Left ventricle myocardium superior (tissue), 1 donor: ENCODE measurements at regions of chr17 and their contacts with region 1.

Region 1: GRCh38 chr17:30091771-30092170 is 24.8 kb upstream of the NSRP1 start:
- DNase-seq: no peak
- ATAC-seq: no peak

Region 2: GRCh38 chr17:30031214-30031869 is 60.4 kb before region 1 on chr17:
- intact Hi-C with region 1: loop called (anchors 2 kb)
- DNase-seq: no peak
- ATAC-seq: no peak

Region 3: GRCh38 chr17:30158896-30159625 is 67.3 kb after region 1 on chr17:
- intact Hi-C with region 1: no loop called
- DNase-seq: no peak
- ATAC-seq: no peak